ENCODE measurements at regions of chr7 and their contacts with region 1.

Region 1: DNA sequence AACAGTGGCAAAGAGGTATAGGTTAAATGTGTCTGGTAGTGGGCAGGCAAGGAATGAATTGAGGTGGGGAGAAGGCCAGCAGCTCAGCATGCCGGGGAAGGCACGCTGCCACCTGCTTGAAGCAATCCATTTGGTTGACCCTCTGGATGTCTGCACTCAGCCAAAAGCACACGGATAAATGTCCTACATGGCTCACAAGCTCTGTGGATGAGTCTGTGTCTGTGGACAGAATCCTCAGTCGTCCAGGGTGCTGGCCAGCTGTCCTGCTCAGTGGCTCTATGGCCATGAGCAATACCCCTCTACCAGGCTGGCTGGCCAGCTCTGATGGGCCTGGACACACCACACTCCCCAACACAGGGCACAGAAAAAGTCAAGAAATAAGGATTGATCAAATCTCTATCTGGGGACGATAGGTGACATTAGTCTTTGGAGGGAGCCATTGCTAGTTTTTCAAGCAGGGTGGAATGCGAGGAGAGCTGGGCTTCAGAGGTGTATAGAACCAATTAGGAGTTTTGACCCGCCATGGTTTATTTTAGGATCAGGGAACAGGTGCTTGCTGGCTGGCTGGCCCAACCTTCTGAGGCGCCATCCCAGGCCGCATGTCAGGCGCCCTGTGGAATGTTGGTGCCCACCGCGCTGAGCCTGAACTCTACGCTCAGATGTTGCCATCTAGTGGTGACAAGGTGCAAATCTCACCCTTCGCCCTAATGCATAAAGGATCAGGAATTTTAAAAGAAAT is 493.4 kb downstream of the TNS3 start:
- DNase-seq: peak; percentile 15 to 63
- H3K4me3 ChIP-seq: no peak overlapping the region
- H3K27ac ChIP-seq: no peak overlapping the region
- H3K4me1 ChIP-seq: no peaks in the 10 kb centered on the region
- H3K27me3 ChIP-seq: no peaks in the 10 kb centered on the region; a peak in 1 of 7 replicates
- CTCF ChIP-seq: peak; percentile 70 to 77 (median 72)
- EP300 ChIP-seq: no peak
- POLR2A ChIP-seq: no peak
- RAD21 ChIP-seq: peak; percentile 96 to 97

Region 2: GRCh38 chr7:46776790-46777189 is 311.7 kb before region 1 on chr7:
- CTCF ChIA-PET with region 1: interaction called, 10 read pairs
- POLR2A ChIA-PET with region 1: no interaction called
- DNase-seq: no peak
- H3K4me3 ChIP-seq: no peak overlapping the region
- H3K27ac ChIP-seq: no peak overlapping the region
- H3K4me1 ChIP-seq: no peaks in the 10 kb centered on the region
- H3K27me3 ChIP-seq: no peaks in the 10 kb centered on the region
- CTCF ChIP-seq: peak in 2 of 3 experiments; percentile 27 to 46; a peak in 2 of 4 replicates
- EP300 ChIP-seq: no peak
- POLR2A ChIP-seq: no peak
- RAD21 ChIP-seq: peak; percentile 46 to 54

Region 3: DNA sequence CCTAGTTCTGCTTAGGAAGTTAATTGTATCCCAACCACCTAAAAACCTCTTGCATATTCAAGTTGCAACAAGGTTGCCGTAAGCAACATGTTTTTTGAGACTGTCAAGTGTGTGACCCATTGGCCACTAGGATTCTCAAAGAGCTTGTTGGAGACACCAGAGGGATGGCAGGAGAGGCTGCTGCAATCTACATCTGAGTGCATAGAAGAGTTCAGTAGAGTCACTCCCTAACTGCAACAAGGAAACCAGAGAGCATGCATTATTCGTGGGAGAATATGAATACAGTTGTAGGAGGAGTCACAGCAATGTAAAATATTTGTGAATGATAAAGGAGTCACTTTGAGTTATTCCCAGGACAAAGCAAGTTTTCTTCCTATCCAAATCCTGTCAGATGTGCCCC is 45.2 kb before region 1 on chr7:
- CTCF ChIA-PET with region 1: no interaction called
- POLR2A ChIA-PET with region 1: no interaction called
- DNase-seq: no peak
- H3K4me3 ChIP-seq: no peak overlapping the region
- H3K27ac ChIP-seq: no peak overlapping the region
- H3K4me1 ChIP-seq: peaks cover 2 to 12% (median 10%) of the 10 kb centered on the region in 4 experiments; a peak in 5 of 7 replicates
- H3K27me3 ChIP-seq: peaks cover 0 to 4% (median 1%) of the 10 kb centered on the region in 4 experiments; a peak in 3 of 7 replicates
- CTCF ChIP-seq: peak in 1 of 3 experiments; percentile 3; a peak in 1 of 4 replicates
- EP300 ChIP-seq: no peak
- POLR2A ChIP-seq: no peak
- RAD21 ChIP-seq: no peak

Region 4: GRCh38 chr7:47100817-47101435 is 12.4 kb after region 1 on chr7:
- CTCF ChIA-PET with region 1: interaction called, 18 read pairs
- POLR2A ChIA-PET with region 1: no interaction called
- DNase-seq: peak; percentile 27 to 81
- H3K4me3 ChIP-seq: no peak overlapping the region
- H3K27ac ChIP-seq: no peak overlapping the region
- H3K4me1 ChIP-seq: no peaks in the 10 kb centered on the region
- H3K27me3 ChIP-seq: no peaks in the 10 kb centered on the region
- CTCF ChIP-seq: peak; percentile 76 to 94 (median 88)
- EP300 ChIP-seq: no peak
- POLR2A ChIP-seq: no peak
- RAD21 ChIP-seq: peak; percentile 71 to 74

Region 5: GRCh38 chr7:47179812-47180515 is 91.5 kb after region 1 on chr7:
- CTCF ChIA-PET with region 1: interaction called, 19 read pairs
- POLR2A ChIA-PET with region 1: no interaction called
- DNase-seq: peak in 1 of 2 experiments; percentile 68
- H3K4me3 ChIP-seq: no peak overlapping the region
- H3K27ac ChIP-seq: no peak overlapping the region
- H3K4me1 ChIP-seq: peaks cover 0 to 6% (median 0%) of the 10 kb centered on the region in 4 experiments; a peak in 1 of 7 replicates
- H3K27me3 ChIP-seq: no peaks in the 10 kb centered on the region
- CTCF ChIP-seq: peak; percentile 48 to 82 (median 74)
- EP300 ChIP-seq: no peak
- POLR2A ChIP-seq: no peak
- RAD21 ChIP-seq: peak; percentile 94